PC-3 (cell line): ENCODE measurements at regions of chr7 and their contacts with region 1.

Region 1: DNA sequence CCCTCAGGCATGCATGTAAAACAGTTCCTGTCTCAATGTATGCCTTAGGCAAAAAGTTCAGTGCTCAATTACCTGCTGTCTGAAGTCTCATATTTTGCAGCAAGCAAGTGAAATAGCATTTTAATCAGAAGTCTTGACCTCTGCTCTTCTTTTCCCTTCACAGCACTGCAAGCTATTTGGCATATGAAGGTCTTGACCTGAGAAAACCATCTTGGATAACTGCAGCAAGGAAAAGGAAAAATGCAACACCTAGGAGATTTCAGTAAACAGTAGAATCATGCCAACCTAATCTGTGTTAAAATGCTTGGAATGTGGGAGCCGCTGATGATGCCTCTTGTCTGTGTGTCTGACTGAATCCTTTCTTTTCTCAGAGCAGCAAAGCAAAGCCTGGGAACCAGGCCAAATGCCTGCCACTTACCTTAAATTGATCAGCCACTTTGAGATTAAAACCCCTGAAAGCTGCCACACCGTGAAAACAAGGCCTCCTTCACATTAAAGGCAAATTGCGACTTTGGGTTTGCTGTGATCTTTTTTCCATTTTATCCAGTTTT is 80.4 kb upstream of the CDK6 start:
- DNase-seq: peak; percentile 84
- ATAC-seq: peak; percentile 98
- H3K4me3 ChIP-seq: no peak overlapping the region
- H3K27ac ChIP-seq: peak overlapping the region; percentile 36
- H3K4me1 ChIP-seq: peaks cover 16% of the 10 kb centered on the region
- H3K27me3 ChIP-seq: no peaks in the 10 kb centered on the region
- CTCF ChIP-seq: no peak

Region 2: DNA sequence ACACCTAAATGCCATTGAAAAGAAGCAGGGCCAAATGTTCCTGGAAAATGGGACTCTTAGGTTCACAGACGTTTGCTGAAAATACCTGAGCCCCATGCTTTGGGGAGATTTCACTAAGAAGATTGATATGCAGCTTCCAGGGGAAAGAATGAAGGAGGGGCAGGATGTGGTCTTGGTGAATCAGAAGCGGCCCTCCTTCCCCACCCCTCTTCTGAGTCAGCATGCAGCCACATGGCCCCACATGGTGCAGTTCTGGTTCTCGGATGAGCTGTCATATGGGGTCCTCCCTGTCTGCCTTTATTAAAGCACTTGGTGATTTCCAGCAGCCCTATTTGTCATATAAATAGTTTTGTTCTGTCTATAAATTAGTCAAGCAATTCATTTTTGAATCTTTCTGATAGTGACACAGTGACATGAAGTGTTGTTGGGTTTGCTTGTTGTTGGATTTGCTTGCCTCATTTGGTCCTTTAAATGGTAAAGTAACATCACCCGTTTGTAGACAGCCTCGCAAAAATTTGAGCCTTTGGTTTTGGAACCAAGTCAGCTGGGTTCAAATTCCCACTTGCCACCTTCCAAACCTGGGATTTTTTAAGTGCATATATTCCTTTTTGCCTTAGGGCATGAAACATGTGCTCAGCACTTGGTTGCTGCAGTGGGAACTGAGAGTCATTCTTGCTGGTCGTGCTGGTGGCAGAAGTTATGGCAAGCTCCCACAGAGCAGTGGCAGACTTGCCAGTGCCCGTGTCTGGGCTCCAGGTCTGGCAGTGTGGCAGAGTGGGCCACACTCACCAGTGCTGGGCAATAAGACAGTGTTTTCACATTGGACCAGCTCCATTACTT is 12.2 kb before region 1 on chr7:
- CTCF ChIA-PET with region 1: no interaction called
- POLR2A ChIA-PET with region 1: no interaction called
- intact Hi-C with region 1: no loop called
- DNase-seq: peak; percentile 94
- ATAC-seq: peak; percentile 98
- H3K4me3 ChIP-seq: no peak overlapping the region
- H3K27ac ChIP-seq: peak overlapping the region; percentile 92
- H3K4me1 ChIP-seq: peaks cover 25% of the 10 kb centered on the region
- H3K27me3 ChIP-seq: no peaks in the 10 kb centered on the region
- CTCF ChIP-seq: no peak

Region 3: GRCh38 chr7:92968502-92968901 is 51.8 kb after region 1 on chr7:
- CTCF ChIA-PET with region 1: no interaction called
- POLR2A ChIA-PET with region 1: no interaction called
- intact Hi-C with region 1: no loop called
- DNase-seq: peak; percentile 15
- ATAC-seq: 0 out of 2 replicates have a peak, but pooled peaks have one; percentile 20
- H3K4me3 ChIP-seq: no peak overlapping the region
- H3K27ac ChIP-seq: no peak overlapping the region
- H3K4me1 ChIP-seq: no peaks in the 10 kb centered on the region
- H3K27me3 ChIP-seq: no peaks in the 10 kb centered on the region
- CTCF ChIP-seq: no peak

Region 4: DNA sequence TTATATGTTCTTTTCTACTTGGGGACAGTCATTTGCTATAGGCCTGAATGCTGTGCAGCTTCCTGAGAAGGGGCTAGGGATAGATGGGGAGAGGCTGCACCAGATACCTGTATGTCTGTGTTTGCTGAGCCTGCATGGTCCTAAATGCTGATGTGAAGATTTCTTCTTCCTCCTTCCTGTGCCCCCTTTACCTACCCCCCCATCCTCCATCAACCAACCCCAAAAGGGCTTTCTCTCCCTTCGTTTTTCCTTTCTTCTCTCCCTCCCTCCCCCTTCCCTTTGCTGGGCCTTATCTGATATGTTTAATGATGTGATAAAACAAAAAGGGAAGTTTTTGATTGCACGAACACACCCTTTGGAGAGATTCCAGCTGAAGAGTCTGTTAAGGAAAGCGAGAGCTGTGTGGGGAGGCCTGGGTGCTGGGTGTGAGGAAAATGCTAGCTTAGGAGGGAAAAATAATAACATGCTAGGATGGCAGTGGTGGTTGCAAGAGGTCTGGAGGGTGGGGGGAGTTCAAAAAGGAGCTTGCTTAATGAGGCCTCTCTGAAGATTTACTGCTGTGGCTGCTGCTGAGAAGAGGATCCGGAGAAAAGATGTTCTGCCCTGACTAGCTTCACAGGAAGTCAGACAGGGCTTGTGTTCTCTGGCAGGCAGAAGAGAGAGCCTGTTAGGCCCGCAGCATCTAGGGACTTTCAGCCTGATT is 99.2 kb after region 1 on chr7:
- CTCF ChIA-PET with region 1: no interaction called
- POLR2A ChIA-PET with region 1: no interaction called
- intact Hi-C with region 1: loop called (anchors 10 kb)
- DNase-seq: no peak
- ATAC-seq: no peak
- H3K4me3 ChIP-seq: no peak overlapping the region
- H3K27ac ChIP-seq: peak overlapping the region; percentile 37
- H3K4me1 ChIP-seq: peaks cover 38% of the 10 kb centered on the region
- H3K27me3 ChIP-seq: no peaks in the 10 kb centered on the region
- CTCF ChIP-seq: no peak